ENCODE measurements at regions of chr3 and their contacts with region 1.

Region 1: GRCh38 chr3:194985031-194985578 is 285.9 kb downstream of the XXYLT1 start:
- DNase-seq: peak; percentile 57
- H3K4me3 Mint-ChIP-seq: peak overlapping the region; percentile 52
- H3K27ac Mint-ChIP-seq: no peak overlapping the region
- H3K4me1 Mint-ChIP-seq: peaks cover 28% of the 10 kb centered on the region
- H3K27me3 Mint-ChIP-seq: peaks cover 39% of the 10 kb centered on the region
- CTCF ChIP-seq: peak; percentile 13

Region 2: GRCh38 chr3:194497821-194498598 is 487.1 kb before region 1 on chr3:
- CTCF ChIA-PET with region 1: no interaction called
- intact Hi-C with region 1: no loop called
- DNase-seq: no peak
- H3K4me3 Mint-ChIP-seq: no peak overlapping the region
- H3K27ac Mint-ChIP-seq: no peak overlapping the region
- H3K4me1 Mint-ChIP-seq: peaks cover 42% of the 10 kb centered on the region
- H3K27me3 Mint-ChIP-seq: no peaks in the 10 kb centered on the region
- CTCF ChIP-seq: no peak

Region 3: DNA sequence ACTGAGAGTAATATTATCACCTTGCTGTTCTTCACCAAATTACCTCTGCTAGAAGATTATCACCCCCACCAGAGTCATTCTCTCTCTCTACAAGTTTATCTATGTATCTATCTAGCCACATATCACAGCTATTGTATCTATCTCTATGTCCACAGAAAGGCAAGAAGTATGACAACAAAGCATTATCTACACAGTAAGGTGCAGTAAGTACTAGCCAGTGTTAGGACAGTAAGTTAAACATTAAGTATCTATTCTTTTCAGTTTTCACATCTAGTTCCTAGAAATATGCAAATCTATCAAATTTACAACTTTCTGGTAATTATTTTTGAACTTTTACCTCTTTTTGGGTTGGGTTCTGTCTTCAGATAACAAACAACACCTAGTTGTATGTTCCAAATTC is 312.3 kb after region 1 on chr3:
- CTCF ChIA-PET with region 1: interaction called, 11 read pairs
- intact Hi-C with region 1: no loop called
- DNase-seq: no peak
- H3K4me3 Mint-ChIP-seq: no peak overlapping the region
- H3K27ac Mint-ChIP-seq: no peak overlapping the region
- H3K4me1 Mint-ChIP-seq: peaks cover 11% of the 10 kb centered on the region
- H3K27me3 Mint-ChIP-seq: no peaks in the 10 kb centered on the region
- CTCF ChIP-seq: no peak